ENCODE measurements at regions of chr4 and their contacts with region 1.

Region 1: DNA sequence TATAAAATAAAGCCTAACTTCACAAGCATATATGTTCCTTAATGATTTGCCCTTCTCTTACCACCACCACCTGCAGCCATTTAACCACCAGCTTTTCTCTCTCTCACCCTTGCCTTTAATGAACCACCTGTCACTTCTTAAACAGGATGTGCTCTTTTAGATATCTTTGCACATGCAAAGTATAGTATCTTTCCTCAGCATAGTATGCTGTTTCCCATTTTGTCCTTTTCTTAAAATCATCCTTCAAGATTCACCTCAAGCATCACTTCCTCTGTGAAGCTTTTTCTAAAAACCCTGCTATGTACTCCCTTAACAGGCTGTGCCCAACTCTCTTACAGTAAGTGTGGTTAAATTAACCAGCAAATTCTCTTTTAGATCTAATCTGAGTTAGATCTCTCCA is 8.2 kb upstream of the CNOT6L start:
- DNase-seq: peak in 4 of 14 experiments; percentile 18 to 75 (median 39)
- ATAC-seq: peak; percentile 91
- H3K4me3 ChIP-seq: no peak overlapping the region
- H3K4me3 Mint-ChIP-seq: peak overlapping the region; percentile 32
- H3K27ac ChIP-seq: peak overlapping the region; percentile 16 to 66
- H3K27ac Mint-ChIP-seq: peak overlapping the region; percentile 75
- H3K4me1 ChIP-seq: peaks cover 37% of the 10 kb centered on the region
- H3K4me1 Mint-ChIP-seq: peaks cover 56% of the 10 kb centered on the region
- H3K27me3 ChIP-seq: no peaks in the 10 kb centered on the region
- H3K27me3 Mint-ChIP-seq: no peaks in the 10 kb centered on the region
- CTCF ChIP-seq: no peak

Region 2: GRCh38 chr4:77843628-77844027 is 16.3 kb after region 1 on chr4:
- CTCF ChIA-PET with region 1: no interaction called
- POLR2A ChIA-PET with region 1: interaction called, 1,450 read pairs
- intact Hi-C with region 1: loop called in 1 of 2 experiments (anchors 2 kb)
- DNase-seq: no peak
- ATAC-seq: no peak
- H3K4me3 ChIP-seq: no peak overlapping the region
- H3K4me3 Mint-ChIP-seq: no peak overlapping the region
- H3K27ac ChIP-seq: no peak overlapping the region
- H3K27ac Mint-ChIP-seq: no peak overlapping the region
- H3K4me1 ChIP-seq: no peaks in the 10 kb centered on the region
- H3K4me1 Mint-ChIP-seq: peaks cover 23% of the 10 kb centered on the region
- H3K27me3 ChIP-seq: no peaks in the 10 kb centered on the region
- H3K27me3 Mint-ChIP-seq: no peaks in the 10 kb centered on the region
- CTCF ChIP-seq: no peak

Region 3: DNA sequence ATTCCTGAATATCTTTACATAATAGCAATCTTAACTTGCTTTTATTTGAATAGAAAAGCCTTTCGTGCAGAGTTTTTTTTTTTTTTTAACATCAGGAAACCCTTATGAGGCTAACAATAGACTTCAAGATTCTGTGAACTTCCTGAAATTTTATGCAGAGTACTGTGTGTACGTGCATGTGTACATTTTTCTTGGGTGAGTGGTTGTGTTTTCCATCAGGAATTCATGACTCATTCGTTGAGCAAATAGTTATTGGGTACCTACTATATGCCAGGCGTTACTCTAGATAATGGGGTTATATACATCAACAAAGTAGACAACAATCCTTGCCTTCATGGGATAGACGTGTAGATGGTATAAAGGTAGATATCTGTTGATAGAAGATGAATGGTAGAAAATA is 94.4 kb after region 1 on chr4:
- CTCF ChIA-PET with region 1: no interaction called
- POLR2A ChIA-PET with region 1: no interaction called
- intact Hi-C with region 1: no loop called
- DNase-seq: no peak
- ATAC-seq: no peak
- H3K4me3 ChIP-seq: no peak overlapping the region
- H3K4me3 Mint-ChIP-seq: no peak overlapping the region
- H3K27ac ChIP-seq: no peak overlapping the region
- H3K27ac Mint-ChIP-seq: no peak overlapping the region
- H3K4me1 ChIP-seq: no peaks in the 10 kb centered on the region
- H3K4me1 Mint-ChIP-seq: peaks cover 18% of the 10 kb centered on the region
- H3K27me3 ChIP-seq: no peaks in the 10 kb centered on the region
- H3K27me3 Mint-ChIP-seq: no peaks in the 10 kb centered on the region
- CTCF ChIP-seq: no peak